ENCODE measurements at regions of chr2 and their contacts with region 1.

Region 1: DNA sequence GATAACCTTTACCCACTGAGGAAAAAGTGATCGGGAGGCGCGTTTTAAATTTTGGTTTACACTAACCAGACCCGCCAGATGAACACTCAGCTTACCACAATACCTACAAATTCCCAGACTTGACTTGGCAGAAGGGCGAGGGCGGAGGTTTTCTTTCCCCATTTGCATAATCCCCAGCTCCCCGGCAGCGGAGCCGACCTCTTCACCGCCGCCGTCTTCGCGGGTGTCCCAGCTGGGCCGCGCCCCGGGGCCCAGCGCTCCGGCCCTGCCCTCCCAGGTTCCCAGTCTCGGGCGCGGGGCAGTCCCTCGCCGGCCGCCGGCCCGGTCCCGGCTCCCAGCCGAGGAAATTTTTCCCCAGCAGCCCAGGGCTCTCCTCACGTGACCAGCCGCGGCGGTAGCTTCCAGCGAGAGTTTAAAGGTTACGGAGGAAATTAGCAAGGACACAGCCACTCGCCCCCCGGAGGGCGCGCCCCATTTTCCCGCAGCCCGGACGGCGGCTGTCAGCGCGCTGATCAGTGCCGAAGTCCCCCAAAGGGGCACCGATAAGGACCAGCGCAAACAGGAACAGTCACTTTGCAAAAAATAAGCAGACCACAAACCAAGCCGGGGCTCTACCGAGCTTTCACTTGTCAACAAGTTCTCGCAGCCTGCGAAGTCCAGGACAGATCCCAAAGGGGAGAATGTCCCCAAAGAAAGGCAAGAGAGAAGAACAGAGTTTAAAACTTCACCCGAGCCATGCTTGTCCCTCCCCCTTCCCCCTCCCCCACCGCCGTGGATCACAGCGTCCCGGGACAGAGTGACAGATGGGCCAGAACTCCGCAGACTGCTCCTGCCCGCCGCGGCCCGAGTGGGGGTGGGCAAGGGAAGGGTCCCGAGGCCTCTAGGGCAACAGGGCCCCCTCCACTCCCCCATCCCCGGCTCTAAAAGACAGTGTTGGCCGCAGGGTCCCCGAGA is 1.3 kb upstream of the PRKCE start:
- DNase-seq: peak; percentile 76 to 82
- H3K4me3 ChIP-seq: peak overlapping the region; percentile 59
- H3K4me1 ChIP-seq: peaks cover 9% of the 10 kb centered on the region
- H3K27me3 ChIP-seq: no peaks in the 10 kb centered on the region

Region 2: GRCh38 chr2:45595721-45596435 is 54.3 kb before region 1 on chr2:
- in situ Hi-C with region 1: no loop called
- DNase-seq: peak; percentile 34 to 70
- H3K4me3 ChIP-seq: no peak overlapping the region
- H3K4me1 ChIP-seq: peaks cover 32% of the 10 kb centered on the region
- H3K27me3 ChIP-seq: no peaks in the 10 kb centered on the region

Region 3: DNA sequence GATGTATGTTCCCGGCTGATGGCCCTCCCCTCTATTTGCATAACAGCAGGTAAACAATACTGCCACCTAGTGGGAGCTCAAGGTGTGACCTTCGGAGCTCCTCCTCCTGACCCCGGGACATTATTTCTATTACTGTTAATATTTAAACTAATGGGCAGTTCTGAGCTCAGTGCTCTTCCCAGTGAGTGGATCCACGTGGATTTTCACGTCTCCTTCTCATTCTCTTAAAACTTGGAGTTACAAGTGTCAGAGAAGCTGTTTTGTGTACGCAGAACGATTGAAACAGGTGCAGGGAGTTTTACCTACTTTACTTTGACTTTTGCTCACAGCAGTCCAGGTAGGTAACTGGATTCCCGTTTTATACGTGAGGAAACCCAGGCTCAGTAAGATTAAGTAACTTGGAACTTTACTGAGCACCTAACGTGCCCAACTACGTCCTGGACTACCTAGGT is 128.6 kb after region 1 on chr2:
- in situ Hi-C with region 1: loop called (anchors 5 kb)
- DNase-seq: peak; percentile 49 to 82
- H3K4me3 ChIP-seq: no peak overlapping the region
- H3K4me1 ChIP-seq: no peaks in the 10 kb centered on the region
- H3K27me3 ChIP-seq: no peaks in the 10 kb centered on the region

Region 4: DNA sequence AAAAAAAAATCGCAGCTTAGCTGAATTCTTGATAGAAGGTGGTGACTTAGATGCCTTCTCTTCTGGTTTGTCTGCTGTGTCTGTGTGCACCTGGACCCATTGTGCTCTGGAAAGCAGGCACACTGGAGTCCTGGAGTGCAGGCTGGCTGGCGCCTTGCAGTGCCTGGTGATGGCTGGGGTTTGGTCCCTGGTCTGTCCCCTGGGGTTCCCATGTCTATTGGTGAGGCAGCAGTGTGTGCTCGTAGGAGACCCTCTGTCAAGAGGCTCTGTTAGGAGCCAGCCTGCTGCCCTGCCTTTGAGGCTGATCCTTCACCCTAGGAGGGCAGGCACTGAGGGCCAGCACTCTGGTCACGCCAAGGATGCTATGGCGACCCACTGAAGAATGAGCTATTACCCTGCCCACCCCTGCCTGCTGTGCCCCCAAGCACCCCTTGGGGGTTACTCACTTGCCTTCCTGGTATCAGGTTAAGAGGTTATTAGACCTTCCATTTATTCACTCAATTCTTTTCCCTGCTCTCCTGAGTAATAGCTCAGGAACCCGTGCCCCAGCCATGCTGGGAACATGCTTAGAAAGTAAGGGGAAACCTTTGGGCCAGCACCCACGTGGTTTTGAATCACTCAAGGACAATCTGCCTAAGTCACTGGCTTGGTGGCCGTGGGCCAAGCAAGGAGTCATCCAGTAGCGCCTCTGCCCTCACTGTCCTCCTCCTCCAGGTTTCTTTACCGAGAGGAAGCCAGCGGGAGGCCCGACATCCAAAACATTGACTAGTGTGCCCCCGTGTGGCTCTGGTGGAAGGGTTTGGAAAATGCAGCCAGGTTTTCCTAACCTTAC is 285.9 kb after region 1 on chr2:
- in situ Hi-C with region 1: loop called (anchors 5 kb)
- DNase-seq: peak; percentile 73 to 83
- H3K4me3 ChIP-seq: no peak overlapping the region
- H3K4me1 ChIP-seq: no peaks in the 10 kb centered on the region
- H3K27me3 ChIP-seq: no peaks in the 10 kb centered on the region

Measured in HAP-1 (cell line).